ENCODE measurements at regions of chr15 and their contacts with region 1.

Region 1: DNA sequence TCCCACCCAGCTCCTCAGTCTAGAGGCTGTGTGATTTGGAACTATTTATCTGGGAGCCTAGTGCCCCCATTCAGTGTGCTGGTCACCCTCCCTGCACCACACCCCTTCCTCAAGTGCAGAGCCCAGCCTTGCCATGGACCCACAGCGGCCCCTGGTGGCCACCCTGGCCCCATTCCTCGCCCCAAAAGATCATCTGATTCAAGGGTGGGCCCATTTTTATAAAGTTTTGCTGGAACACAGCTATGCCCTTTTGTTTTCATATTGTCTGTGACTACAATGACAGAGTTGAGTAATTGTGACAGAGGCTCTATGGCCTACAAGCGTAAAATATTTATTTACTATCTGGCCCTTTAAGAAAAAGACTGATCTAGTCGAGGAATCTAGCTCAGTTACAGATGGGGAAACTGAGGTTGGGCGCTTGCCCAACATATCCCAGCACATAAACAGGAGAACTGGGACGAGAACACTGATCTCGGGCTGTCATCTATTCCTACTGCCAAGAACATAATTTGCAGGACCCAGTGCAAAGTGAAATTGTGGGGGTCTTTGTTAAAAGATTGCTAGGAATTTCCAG is 1.8 kb downstream of the FES start:
- DNase-seq: peak; percentile 77 to 91
- H3K4me3 ChIP-seq: peak overlapping the region; percentile 55 to 62 (median 56)
- H3K27ac ChIP-seq: peak overlapping the region in 4 of 5 donors; percentile 91 to 96 (median 92)
- H3K4me1 ChIP-seq: peaks cover 29 to 49% (median 43%) of the 10 kb centered on the region in 4 donors
- H3K27me3 ChIP-seq: no peaks in the 10 kb centered on the region
- CTCF ChIP-seq: peak in 5 of 7 experiments; percentile 82 to 99 (median 93)
- EP300 ChIP-seq: no peak
- POLR2A ChIP-seq: no peak

Region 2: GRCh38 chr15:90650117-90650955 is 235.8 kb before region 1 on chr15:
- intact Hi-C with region 1: loop called (anchors 5 kb)
- DNase-seq: peak in 1 of 2 donors; percentile 40
- H3K4me3 ChIP-seq: no peak overlapping the region
- H3K27ac ChIP-seq: peak overlapping the region in 3 of 5 donors; percentile 4 to 76 (median 75)
- H3K4me1 ChIP-seq: peaks cover 0 to 33% (median 6%) of the 10 kb centered on the region in 4 donors
- H3K27me3 ChIP-seq: peaks cover 0 to 19% (median 0%) of the 10 kb centered on the region in 3 donors
- CTCF ChIP-seq: no peak
- EP300 ChIP-seq: no peak
- POLR2A ChIP-seq: no peak

Region 3: DNA sequence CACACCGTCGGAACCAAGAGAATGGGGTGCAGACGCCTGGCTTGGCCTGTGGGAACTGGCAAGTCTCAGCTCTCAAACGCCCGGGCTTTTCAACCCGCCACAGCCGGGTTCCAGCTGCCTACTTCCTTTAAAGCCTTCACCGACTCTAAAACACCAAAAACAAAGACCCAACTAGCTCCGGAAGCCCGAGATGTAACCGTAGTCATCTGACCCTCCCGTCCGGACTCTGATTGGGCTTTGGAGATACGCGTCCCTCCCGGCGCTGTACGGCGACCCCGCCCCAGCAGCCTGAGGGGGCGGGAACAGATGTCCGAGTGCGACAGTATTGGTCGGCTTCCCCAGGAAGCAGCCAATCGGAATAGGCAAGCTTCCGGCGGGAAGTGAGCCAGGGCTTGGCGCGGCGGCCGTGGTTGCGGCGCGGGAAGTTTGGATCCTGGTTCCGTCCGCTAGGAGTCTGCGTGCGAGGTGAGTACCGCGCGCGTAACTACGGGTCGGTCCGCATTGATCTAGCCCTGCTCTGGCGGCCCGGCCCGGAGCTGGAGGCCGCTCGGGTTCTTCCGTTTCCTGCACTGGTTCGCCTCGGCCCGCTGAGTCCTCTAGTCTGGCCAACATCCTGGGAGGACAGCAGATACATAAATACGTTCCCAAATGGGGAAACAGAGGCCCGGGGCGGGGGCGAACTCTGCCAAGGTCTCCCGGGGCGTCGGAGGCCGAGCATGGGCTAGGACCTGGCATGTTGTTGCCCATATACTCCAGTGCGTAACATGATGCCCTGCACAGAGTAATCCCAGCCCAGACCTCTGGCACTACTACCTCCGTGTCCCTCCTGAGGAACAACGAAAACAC is 168.9 kb before region 1 on chr15 and contains the start of gene BLM:
- intact Hi-C with region 1: loop called (anchors 5 kb)
- DNase-seq: peak; percentile 97 to 99
- H3K4me3 ChIP-seq: peak within 1 kb of the TSS; percentile 63 to 86 (median 78)
- H3K27ac ChIP-seq: peak within 1 kb of the TSS; percentile 88 to 95 (median 91)
- H3K4me1 ChIP-seq: peaks cover 10 to 22% (median 16%) of the 10 kb centered on the region in 4 donors
- H3K27me3 ChIP-seq: no peaks in the 10 kb centered on the region
- CTCF ChIP-seq: peak in 5 of 7 experiments; percentile 33 to 52 (median 41)
- EP300 ChIP-seq: no peak
- POLR2A ChIP-seq: no peak
- total RNA-seq, gene BLM: 1.8 to 10.5 (median 4.6) TPM

Region 4: DNA sequence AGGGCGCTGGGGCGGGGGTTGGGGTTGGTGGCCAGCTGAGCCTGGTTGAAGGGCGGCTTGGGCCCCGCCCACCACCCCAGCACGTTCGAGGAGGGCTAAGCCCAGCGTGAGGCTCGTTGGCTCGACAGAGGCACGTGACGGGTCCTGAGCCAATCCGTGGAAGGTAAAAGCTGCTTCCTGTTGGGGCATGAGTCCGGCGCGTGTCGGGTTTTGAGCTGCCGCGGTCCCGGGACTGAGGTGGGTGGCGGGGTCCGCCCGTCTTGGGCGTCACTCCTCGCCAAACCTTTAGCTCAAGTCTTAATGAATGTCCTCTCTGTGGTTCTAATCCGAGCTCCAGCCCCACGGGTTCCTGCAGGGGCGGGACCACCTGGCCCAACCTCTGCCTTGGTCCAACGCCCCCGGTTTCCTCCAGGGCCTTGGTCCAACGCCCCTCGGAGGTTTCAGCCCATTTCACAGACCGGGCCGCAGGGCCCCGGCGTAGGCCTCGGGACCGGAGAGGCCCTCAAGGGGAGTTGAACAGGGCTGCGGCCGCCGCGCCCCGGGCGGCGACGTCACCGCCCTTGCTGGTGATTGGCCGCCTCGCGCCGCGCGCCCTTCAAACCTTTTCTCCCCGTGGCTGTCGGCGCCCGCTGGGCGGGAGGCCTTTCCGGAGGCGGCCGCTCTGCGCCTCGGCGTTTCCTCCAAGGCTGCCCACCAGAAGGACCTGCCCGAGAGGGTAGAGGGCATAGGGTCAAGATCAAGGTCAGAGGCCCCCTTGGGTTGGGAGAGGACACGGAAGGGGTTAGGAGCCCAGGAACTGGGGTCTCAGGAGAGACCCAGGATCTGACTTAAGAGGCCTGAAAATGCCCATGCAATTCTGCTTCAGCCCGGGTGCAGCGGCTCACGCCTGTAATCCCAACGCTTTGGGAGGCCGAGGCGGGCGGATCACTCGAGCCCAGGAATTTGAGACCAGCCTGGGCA is 68.9 kb after region 1 on chr15 and contains the start of gene RCCD1:
- intact Hi-C with region 1: no loop called
- DNase-seq: peak; percentile 95 to 98
- H3K4me3 ChIP-seq: peak within 1 kb of the TSS; percentile 72 to 80 (median 76)
- H3K27ac ChIP-seq: peak within 1 kb of the TSS; percentile 96 to 98 (median 97)
- H3K4me1 ChIP-seq: peaks cover 14 to 46% (median 33%) of the 10 kb centered on the region in 4 donors
- H3K27me3 ChIP-seq: no peaks in the 10 kb centered on the region
- CTCF ChIP-seq: no peak
- EP300 ChIP-seq: no peak
- POLR2A ChIP-seq: no peak
- total RNA-seq, gene RCCD1: 2.2 to 98.5 (median 8.8) TPM